ENCODE measurements at regions of chr5 and their contacts with region 1.

Region 1: DNA sequence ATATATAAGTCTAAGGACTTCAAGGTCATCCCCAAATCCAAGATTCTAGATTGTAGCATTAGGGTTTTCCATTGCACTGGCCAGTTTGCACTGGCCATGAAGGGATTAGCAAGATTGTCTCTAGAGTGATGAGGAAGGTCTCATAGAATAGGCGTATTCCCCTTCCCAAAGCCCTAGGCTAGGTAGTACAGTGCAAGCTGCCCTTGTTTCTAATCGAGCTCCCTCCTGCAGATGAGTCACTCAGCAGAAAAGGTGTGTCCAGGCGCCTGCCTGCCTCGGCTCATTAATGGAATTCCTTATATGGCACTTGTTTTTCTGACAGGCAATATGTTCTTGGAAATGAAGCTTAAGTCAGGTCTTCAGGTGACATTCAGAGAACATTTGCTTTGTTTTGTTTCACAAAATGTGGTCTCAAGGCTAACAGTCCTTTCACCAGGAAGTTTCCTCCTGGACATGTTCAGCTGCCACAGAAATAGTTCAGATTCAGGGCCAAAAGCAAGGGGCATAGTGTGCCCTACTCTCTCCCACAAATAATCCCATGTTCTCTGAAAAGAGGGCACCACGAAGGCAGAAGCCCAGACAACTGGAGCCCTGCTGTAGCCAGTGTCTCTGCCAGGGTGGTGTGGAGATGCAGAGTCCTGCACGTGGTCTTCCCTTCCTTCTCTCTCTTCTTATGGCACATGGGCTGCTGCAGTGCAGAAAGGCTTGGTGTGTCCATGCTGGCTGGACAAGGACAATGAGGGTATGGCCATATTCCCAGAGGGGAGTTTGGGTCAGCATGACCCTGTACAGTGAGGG is 281.1 kb upstream of the MAP3K1 start:
- DNase-seq: peak; percentile 89
- H3K4me3 Mint-ChIP-seq: no peak overlapping the region
- H3K27ac Mint-ChIP-seq: peak overlapping the region; percentile 84
- H3K4me1 Mint-ChIP-seq: peaks cover 19% of the 10 kb centered on the region
- H3K27me3 Mint-ChIP-seq: no peaks in the 10 kb centered on the region
- CTCF ChIP-seq: no peak

Region 2: GRCh38 chr5:56350598-56351170 is 183.5 kb before region 1 on chr5:
- CTCF ChIA-PET with region 1: no interaction called
- POLR2A ChIA-PET with region 1: no interaction called
- intact Hi-C with region 1: loop called (anchors 5 kb)
- DNase-seq: peak; percentile 98
- H3K4me3 Mint-ChIP-seq: no peak overlapping the region
- H3K27ac Mint-ChIP-seq: peak overlapping the region; percentile 15
- H3K4me1 Mint-ChIP-seq: peaks cover 29% of the 10 kb centered on the region
- H3K27me3 Mint-ChIP-seq: no peaks in the 10 kb centered on the region
- CTCF ChIP-seq: no peak

Region 3: GRCh38 chr5:56517011-56517416 is 17.2 kb before region 1 on chr5:
- CTCF ChIA-PET with region 1: interaction called, 3 read pairs
- POLR2A ChIA-PET with region 1: interaction called, 17 read pairs
- intact Hi-C with region 1: no loop called
- DNase-seq: peak; percentile 63
- H3K4me3 Mint-ChIP-seq: no peak overlapping the region
- H3K27ac Mint-ChIP-seq: no peak overlapping the region
- H3K4me1 Mint-ChIP-seq: peaks cover 30% of the 10 kb centered on the region
- H3K27me3 Mint-ChIP-seq: no peaks in the 10 kb centered on the region
- CTCF ChIP-seq: no peak